WTC11 (cell line): ENCODE measurements at regions of chr16 and their contacts with region 1.

Region 1: GRCh38 chr16:70342016-70342415 is 4.7 kb upstream of the DDX19A start:
- DNase-seq: no peak
- ATAC-seq: peak; percentile 30
- H3K4me3 Mint-ChIP-seq: no peak overlapping the region
- H3K27ac Mint-ChIP-seq: peak overlapping the region; percentile 89
- H3K4me1 Mint-ChIP-seq: peaks cover 20% of the 10 kb centered on the region
- H3K27me3 Mint-ChIP-seq: no peaks in the 10 kb centered on the region
- CTCF ChIP-seq: no peak

Region 2: DNA sequence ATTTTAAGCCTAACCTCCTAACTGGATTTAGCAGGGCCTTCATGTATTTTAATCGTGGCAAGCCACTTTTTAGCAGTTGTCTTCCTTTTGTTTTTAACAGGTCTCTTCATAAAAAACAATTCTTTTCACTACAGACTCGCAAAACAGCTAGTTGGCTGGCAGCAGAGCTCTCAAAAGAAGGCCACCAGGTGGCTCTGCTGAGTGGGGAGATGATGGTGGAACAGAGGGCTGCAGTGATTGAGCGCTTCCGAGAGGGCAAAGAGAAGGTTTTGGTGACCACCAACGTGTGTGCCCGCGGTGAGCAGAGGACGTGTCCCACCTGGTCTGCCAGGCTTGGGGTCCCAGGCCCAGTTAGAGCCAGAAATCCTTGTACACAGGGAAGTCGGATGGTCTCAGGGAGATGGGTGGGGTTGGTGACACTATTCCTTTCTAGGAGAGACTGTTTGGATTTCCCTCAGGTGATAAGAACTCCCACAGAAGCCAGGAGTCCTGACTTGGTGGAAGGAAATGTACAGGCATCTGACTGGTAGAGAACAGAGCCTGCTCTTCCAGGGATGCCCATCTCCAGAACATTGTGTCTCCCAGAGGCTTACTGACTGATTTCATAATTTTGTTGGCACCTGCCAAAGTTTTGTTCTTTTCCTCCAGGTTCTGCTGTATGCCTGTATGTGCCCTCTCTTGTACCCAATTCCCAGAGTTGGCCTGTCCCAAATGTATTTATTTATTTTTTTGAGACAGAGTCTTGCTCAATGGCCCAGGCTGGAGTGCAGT is 10.2 kb before region 1 on chr16:
- CTCF ChIA-PET with region 1: interaction called, 14 read pairs
- POLR2A ChIA-PET with region 1: no interaction called
- DNase-seq: peak; percentile 38
- ATAC-seq: peak; percentile 88
- H3K4me3 Mint-ChIP-seq: no peak overlapping the region
- H3K27ac Mint-ChIP-seq: peak overlapping the region; percentile 11; the same call in 1 of the 2 replicates
- H3K4me1 Mint-ChIP-seq: no peaks in the 10 kb centered on the region
- H3K27me3 Mint-ChIP-seq: no peaks in the 10 kb centered on the region
- CTCF ChIP-seq: no peak

Region 3: GRCh38 chr16:70416748-70417616 is 75.0 kb after region 1 on chr16:
- CTCF ChIA-PET with region 1: no interaction called
- POLR2A ChIA-PET with region 1: no interaction called
- DNase-seq: no peak
- ATAC-seq: no peak
- H3K4me3 Mint-ChIP-seq: no peak overlapping the region
- H3K27ac Mint-ChIP-seq: peak overlapping the region; percentile 79; the same call in 1 of the 2 replicates
- H3K4me1 Mint-ChIP-seq: peaks cover 59% of the 10 kb centered on the region
- H3K27me3 Mint-ChIP-seq: no peaks in the 10 kb centered on the region
- CTCF ChIP-seq: no peak

Region 4: DNA sequence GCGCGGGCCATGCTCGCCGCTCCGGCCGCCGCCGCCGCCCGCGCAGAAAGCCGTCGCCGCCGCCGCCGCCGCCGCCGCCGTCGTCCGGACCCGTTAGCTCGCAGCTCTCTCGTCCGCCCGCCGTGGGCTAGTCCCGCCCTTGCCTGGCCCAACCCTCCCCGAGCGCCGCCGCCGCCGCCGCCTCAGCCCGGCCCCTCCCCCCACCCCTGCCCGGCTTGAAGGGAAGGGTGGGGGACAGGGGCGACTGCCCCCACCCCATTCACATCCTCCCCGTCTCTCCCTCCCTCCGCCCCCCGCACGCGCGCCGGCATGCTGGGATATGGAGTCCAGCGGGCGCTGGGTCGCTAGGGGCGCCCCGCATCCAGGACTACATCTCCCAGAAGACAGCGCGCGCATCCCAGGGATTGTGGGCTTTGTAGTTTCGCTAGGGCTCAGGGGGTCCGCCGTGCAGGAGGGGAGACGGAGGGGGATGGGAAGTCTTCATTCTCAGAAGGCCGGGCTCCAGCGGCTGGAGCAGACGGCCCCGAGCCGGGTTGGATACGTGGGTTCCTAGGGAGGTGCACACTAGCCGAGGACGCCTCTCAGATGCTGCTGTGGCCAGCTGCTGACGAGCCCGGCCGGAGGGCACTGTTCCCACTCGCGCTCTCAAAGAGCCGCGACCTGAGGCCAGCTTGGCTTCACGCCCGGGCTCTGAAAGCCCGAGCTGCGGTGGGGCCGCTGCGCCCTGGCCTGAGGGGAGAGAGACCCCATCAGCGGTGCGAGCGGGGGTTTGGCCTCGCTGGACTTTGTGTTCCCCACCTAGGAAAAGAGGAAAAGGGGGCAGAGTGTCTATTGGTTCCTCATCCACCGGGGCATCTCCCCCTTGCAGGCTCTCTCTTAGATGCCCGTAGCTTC is 97.2 kb after region 1 on chr16 and contains the start of gene ST3GAL2:
- CTCF ChIA-PET with region 1: no interaction called
- POLR2A ChIA-PET with region 1: no interaction called
- DNase-seq: peak; percentile 98
- ATAC-seq: peak; percentile 85
- H3K4me3 Mint-ChIP-seq: peak within 1 kb of the TSS; percentile 99
- H3K27ac Mint-ChIP-seq: peak within 1 kb of the TSS; percentile 96
- H3K4me1 Mint-ChIP-seq: peaks cover 37% of the 10 kb centered on the region
- H3K27me3 Mint-ChIP-seq: no peaks in the 10 kb centered on the region
- CTCF ChIP-seq: no peak
- total RNA-seq, gene ST3GAL2: 46.0 to 49.4 TPM (median 46.2 TPM) in 3 replicates

Region 5: DNA sequence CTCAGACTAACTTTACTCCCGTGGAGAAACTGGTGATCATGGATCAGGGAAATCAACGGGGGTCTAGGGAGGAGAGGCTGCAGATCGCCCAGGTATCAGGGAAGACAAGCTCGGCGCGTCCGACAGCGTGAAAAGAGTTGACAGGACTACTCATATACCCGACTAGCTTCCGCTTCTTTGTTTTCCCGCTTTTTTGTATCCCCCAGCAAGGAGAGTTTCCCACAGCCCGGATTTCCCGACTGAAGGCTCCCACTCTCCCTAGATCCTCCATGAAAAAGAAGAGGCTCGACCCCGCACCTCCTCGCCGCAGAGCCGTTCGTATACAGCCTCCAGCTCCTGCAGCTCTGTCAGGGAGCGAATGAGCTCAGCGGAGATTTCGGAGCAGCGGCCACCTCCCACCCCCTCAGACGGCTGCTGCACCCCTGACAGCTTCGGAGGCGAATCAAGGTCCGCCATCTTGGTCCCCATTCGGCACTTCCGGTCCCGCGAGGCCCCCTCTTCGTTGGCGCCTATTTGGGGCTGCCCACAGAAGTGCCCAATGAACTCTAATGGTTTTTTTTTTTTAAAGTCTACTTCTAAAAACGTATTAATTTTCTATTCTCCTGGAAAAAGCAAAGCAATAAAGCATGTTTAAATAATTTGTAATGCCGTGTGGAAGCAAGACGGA is 181.2 kb after region 1 on chr16 and contains the start of gene COG4:
- CTCF ChIA-PET with region 1: no interaction called
- POLR2A ChIA-PET with region 1: no interaction called
- DNase-seq: peak; percentile 85
- ATAC-seq: peak; percentile 84
- H3K4me3 Mint-ChIP-seq: peak within 1 kb of the TSS; percentile 95
- H3K27ac Mint-ChIP-seq: peak within 1 kb of the TSS; percentile 95
- H3K4me1 Mint-ChIP-seq: peaks cover 29% of the 10 kb centered on the region
- H3K27me3 Mint-ChIP-seq: no peaks in the 10 kb centered on the region
- CTCF ChIP-seq: no peak
- total RNA-seq, gene COG4: 56.6 to 65.6 TPM (median 61.8 TPM) in 3 replicates